Mammary epithelial cell (primary cell): ENCODE measurements at regions of chr14 and their contacts with region 1.

Region 1: GRCh38 chr14:52695481-52696091 is at the start of gene ERO1A:
- DNase-seq: peak; percentile 92
- H3K4me3 ChIP-seq: peak within 1 kb of the TSS; percentile 57 to 98 (median 87)
- H3K27ac ChIP-seq: peak within 1 kb of the TSS; percentile 80
- H3K4me1 ChIP-seq: peaks cover 36% of the 10 kb centered on the region
- H3K27me3 ChIP-seq: no peaks in the 10 kb centered on the region
- CTCF ChIP-seq: no peak
- total RNA-seq, gene ERO1A: 67.5 to 160 TPM

Region 2: GRCh38 chr14:52175982-52176502 is 519.5 kb before region 1 on chr14:
- CTCF ChIA-PET with region 1: no interaction called
- dilution Hi-C with region 1: no loop called
- in situ Hi-C with region 1: no loop called
- intact Hi-C with region 1: no loop called
- DNase-seq: no peak
- H3K4me3 ChIP-seq: no peak overlapping the region
- H3K27ac ChIP-seq: no peak overlapping the region
- H3K4me1 ChIP-seq: no peaks in the 10 kb centered on the region
- H3K27me3 ChIP-seq: no peaks in the 10 kb centered on the region
- CTCF ChIP-seq: no peak

Region 3: DNA sequence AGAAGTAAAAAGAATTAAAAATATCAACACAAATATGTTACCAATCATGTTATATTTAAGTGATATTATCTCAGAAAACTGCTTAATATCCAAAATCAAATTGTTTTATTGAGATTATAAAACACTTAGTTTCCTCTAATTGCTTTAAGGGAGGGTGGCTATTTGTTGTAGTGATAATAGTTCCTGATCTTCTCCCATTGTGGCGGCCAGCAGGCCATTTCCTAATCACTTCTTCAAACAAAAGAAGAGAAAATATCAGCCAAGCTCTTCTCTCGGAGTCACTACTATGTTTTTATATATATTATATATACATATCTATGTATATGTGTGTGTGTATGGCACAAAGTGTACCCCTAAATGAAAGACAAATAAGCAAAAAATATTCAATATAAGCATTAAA is 31.7 kb before region 1 on chr14:
- CTCF ChIA-PET with region 1: no interaction called
- dilution Hi-C with region 1: no loop called
- in situ Hi-C with region 1: no loop called
- intact Hi-C with region 1: no loop called
- DNase-seq: no peak
- H3K4me3 ChIP-seq: no peak overlapping the region
- H3K27ac ChIP-seq: no peak overlapping the region
- H3K4me1 ChIP-seq: no peaks in the 10 kb centered on the region
- H3K27me3 ChIP-seq: no peaks in the 10 kb centered on the region
- CTCF ChIP-seq: no peak

Region 4: DNA sequence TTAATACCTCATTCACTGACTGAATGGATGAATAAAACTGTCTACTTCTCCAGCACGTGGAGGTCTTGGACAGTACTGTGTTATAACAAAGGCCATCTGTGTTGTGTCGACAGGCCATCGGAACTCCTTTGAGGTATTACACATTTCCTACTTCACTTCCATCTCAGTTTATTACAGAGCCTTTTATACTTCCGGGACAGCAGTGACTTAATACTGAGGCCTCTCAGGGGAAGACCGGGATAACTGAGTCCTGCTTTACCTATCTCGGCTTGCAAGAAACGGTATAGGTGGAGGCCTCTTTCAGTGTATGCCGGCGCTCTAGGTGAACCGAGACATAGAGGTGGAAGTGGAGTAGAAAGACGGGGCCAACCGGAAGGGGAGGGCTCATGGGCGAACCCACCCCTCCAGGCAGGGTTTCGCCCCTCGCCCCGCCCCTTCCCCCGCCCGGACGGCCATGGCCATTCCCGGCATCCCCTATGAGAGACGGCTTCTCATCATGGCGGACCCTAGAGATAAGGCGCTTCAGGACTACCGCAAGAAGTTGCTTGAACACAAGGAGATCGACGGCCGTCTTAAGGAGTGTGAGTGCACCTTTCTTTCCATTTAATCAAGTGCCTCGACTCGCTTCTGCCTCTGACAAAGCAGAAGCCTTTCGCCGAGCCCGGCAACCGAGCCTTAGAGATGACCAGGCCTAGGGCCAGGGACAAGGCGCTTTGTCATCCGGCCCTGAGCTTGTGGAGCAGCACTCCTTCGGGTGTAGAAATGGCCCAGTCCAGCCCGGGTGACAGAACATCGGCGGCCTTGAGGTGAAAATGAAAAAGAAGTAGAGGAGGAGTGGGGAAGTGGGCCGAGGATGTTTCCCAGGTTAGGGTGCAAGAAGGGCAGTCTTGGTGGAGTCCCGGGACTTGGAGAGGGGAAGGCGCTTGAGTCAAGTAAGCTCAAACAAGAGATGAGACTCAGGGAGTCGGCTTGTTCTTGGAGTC is 11.4 kb after region 1 on chr14 and contains the start of gene PSMC6:
- CTCF ChIA-PET with region 1: no interaction called
- dilution Hi-C with region 1: no loop called
- in situ Hi-C with region 1: no loop called
- intact Hi-C with region 1: loop called (anchors 1 kb)
- DNase-seq: peak; percentile 91
- H3K4me3 ChIP-seq: peak within 1 kb of the TSS; percentile 68 to 89 (median 78)
- H3K27ac ChIP-seq: peak within 1 kb of the TSS; percentile 90
- H3K4me1 ChIP-seq: peaks cover 29% of the 10 kb centered on the region
- H3K27me3 ChIP-seq: no peaks in the 10 kb centered on the region
- CTCF ChIP-seq: no peak
- total RNA-seq, gene PSMC6: 57.0 to 83.3 TPM

Region 5: DNA sequence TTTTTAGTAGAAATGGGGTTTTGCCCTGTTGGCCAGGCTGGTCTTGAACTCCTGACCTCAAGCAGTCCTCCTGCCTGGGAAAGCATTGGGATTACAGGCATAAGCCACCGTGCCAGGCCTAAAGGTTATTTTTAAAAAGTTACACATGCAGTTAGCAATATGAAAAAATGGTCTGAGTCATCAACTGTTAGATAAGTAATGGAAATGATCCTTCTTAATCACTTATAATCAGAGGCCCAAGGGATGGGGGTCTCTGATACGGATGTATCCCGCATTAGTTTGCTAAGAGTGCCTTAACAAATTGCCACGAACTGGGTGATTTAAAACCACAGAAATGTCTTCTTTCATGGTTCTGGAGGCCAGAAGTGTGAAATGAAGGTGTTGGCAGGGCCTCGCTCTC is 309.4 kb after region 1 on chr14:
- CTCF ChIA-PET with region 1: interaction called, 14 read pairs
- dilution Hi-C with region 1: no loop called
- in situ Hi-C with region 1: no loop called
- intact Hi-C with region 1: no loop called
- DNase-seq: no peak
- H3K4me3 ChIP-seq: no peak overlapping the region
- H3K27ac ChIP-seq: no peak overlapping the region
- H3K4me1 ChIP-seq: no peaks in the 10 kb centered on the region
- H3K27me3 ChIP-seq: no peaks in the 10 kb centered on the region
- CTCF ChIP-seq: no peak